BJ (cell line): ENCODE measurements at regions of chr2 and their contacts with region 1.

Region 1: DNA sequence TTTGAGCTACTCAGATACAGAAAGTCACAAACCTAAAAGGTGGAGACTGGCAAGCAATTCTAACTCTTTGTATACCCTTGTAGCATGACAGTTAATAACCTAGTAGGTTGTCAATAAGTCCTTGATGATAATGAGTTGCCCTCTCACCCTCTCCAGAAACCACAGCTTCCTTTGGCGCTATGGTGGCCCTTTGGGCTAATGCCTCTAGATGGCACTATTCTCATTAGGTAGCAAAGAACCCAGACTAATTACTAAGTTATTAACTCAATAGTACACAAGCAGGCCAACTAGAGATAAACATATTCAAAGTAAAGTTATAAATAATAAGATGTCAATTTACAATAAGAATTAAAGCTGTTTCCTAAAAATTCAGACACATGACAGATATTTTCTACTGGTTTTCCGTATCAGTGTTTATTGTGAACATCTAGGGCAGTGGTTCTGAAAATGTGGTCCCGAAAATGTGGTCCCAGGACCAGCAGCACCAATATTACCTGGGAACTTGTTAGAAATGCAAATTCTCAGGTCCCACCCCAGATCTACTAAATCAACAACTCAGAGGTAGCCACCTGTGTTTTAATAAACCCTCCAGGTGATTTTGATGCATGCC is 41.1 kb downstream of the LDAH start:
- DNase-seq: no peak
- H3K4me3 ChIP-seq: no peak overlapping the region
- H3K27me3 ChIP-seq: no peaks in the 10 kb centered on the region
- CTCF ChIP-seq: peak; percentile 73

Region 2: GRCh38 chr2:20771299-20771698 is 10.5 kb before region 1 on chr2:
- CTCF ChIA-PET with region 1: interaction called, 20 read pairs
- POLR2A ChIA-PET with region 1: no interaction called
- DNase-seq: peak; percentile 25
- H3K4me3 ChIP-seq: no peak overlapping the region
- H3K27me3 ChIP-seq: no peaks in the 10 kb centered on the region
- CTCF ChIP-seq: no peak

Region 3: GRCh38 chr2:20796374-20796791 is 14.6 kb after region 1 on chr2:
- CTCF ChIA-PET with region 1: interaction called, 23 read pairs
- POLR2A ChIA-PET with region 1: no interaction called
- DNase-seq: no peak
- H3K4me3 ChIP-seq: no peak overlapping the region
- H3K27me3 ChIP-seq: no peaks in the 10 kb centered on the region
- CTCF ChIP-seq: no peak

Region 4: GRCh38 chr2:20900052-20900636 is 118.4 kb after region 1 on chr2:
- CTCF ChIA-PET with region 1: no interaction called
- POLR2A ChIA-PET with region 1: no interaction called
- DNase-seq: no peak
- H3K4me3 ChIP-seq: no peak overlapping the region
- H3K27me3 ChIP-seq: no peaks in the 10 kb centered on the region
- CTCF ChIP-seq: no peak